Left ventricle myocardium superior (tissue), 1 donor: ENCODE measurements at regions of chr1 and their contacts with region 1.

Region 1: GRCh38 chr1:203861379-203862184 is at the start of gene SNRPE:
- DNase-seq: peak; percentile 95
- ATAC-seq: peak; percentile 99
- total RNA-seq, gene SNRPE: 49.2 TPM

Region 2: DNA sequence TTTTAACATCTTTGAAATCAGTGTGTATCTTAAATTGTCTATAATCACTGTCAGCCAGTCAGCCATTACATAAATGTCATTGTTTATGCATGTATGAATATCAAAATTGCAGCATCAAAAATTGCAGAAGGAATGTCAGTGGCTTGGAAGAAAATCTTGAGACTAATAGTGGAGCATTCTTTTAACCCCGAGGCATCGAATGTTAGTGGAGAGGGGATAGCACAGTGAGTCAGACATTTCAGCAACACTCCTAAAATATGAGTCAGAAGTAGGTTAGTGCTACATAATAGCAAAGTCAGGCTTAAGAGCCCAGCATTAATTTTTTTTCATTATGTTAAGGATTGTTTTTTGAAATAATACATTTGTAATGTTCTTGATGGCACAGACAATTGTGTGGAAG is 45.4 kb after region 1 on chr1:
- intact Hi-C with region 1: no loop called
- DNase-seq: no peak
- ATAC-seq: no peak

Region 3: GRCh38 chr1:204128964-204129896 is 267.6 kb after region 1 on chr1:
- intact Hi-C with region 1: loop called (anchors 5 kb)
- DNase-seq: peak; percentile 81
- ATAC-seq: peak; percentile 88